ENCODE measurements at regions of chr6 and their contacts with region 1.

Region 1: GRCh38 chr6:107618672-107619071 is 128.8 kb downstream of the SOBP start:
- DNase-seq: no peak
- H3K4me3 ChIP-seq: no peak overlapping the region
- H3K27ac ChIP-seq: no peak overlapping the region
- H3K4me1 ChIP-seq: peaks cover 0 to 5% of the 10 kb centered on the region in 2 donors
- H3K27me3 ChIP-seq: no peaks in the 10 kb centered on the region
- CTCF ChIP-seq: no peak
- POLR2A ChIP-seq: no peak

Region 2: DNA sequence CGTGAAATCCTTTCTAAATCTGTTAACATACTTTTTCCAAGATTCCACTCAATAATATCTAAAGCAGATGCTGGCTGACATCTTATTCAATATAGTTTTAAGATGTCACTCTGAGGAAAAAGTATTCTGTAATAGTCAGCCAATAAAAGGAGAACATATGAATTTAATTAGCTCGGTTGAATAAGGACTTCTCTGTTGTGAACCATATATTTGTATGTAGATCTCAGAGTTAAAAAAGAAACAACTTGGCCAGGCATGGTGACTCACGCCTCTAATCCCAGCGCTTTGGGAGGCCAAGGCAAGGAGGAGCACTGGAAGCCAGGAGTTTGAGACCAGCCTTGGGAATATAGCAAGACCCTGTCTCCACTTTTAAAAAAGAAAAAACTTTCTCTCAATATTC is 636.7 kb before region 1 on chr6:
- intact Hi-C with region 1: no loop called
- DNase-seq: no peak
- H3K4me3 ChIP-seq: no peak overlapping the region
- H3K27ac ChIP-seq: no peak overlapping the region
- H3K4me1 ChIP-seq: no peaks in the 10 kb centered on the region
- H3K27me3 ChIP-seq: no peaks in the 10 kb centered on the region
- CTCF ChIP-seq: no peak
- POLR2A ChIP-seq: no peak

Region 3: DNA sequence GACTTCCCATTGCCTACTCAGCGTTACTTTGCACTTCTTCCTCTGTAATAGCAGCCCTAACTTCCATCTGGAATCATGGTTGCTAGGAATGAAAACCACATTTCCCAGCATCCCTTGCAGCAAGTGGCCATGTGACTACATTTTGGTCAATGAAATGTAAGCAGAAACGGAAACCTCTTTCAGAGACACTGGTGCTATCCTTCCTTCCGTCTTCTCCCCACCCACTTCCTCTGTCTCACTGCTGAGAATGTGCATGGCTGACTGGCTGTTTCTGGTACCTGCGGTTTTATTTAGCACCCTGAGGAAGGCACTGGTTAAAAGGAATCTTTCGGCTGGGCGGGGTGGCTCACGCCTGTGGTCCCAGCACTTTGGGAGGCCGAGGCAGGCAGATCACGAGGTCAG is 98.0 kb after region 1 on chr6:
- intact Hi-C with region 1: loop called (anchors 5 kb)
- DNase-seq: no peak
- H3K4me3 ChIP-seq: no peak overlapping the region
- H3K27ac ChIP-seq: no peak overlapping the region
- H3K4me1 ChIP-seq: no peaks in the 10 kb centered on the region
- H3K27me3 ChIP-seq: no peaks in the 10 kb centered on the region
- CTCF ChIP-seq: no peak
- POLR2A ChIP-seq: no peak

Measured in breast epithelium (tissue), 4 donors.